ENCODE measurements at regions of chr4 and their contacts with region 1.

Region 1: DNA sequence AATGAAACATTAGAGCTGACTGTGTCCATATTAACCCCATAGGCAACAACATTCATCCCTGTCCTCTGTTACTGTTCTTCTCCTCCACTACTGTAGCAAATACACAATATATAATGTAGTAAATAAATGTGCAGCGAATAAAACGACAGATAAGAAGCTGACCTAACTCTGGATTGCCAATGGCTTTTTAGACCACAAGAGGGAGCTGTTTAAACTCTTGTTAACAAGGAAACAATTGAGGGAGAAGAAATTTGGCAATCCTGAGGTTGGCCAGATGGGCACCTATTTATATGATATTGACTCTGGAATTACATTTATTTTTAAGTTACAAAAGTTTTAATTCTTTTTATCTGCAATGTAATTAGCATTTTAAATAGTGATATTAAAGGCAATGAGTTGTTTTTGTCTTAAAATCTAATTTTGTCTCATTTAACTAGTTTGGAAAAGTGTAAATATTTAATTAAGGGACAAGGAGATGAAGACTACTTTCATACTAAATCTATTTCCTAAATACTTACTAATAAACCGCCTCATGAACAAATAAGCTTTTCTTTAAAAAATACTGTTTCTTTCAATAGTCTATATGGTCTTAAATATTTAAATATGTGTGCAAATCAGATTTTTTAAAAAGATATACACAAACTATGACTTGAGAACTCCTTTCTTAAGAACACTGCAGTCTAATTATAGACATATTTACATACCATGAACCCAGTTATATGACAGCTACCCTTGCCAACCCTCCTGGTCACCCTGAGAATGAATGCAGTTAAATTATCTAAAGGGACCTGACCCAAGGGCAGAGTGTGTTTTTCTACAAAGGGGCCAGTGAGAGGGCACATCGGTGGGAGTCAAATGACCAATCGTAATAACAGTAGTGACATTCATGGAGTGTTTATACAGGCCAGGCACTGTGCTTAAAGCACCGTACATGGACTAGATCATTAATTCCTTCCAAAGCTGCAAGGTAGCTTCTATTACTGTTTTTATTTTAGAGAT is 52.9 kb upstream of the HPF1 start:
- DNase-seq: no peak
- H3K4me3 ChIP-seq: no peak overlapping the region
- H3K27me3 ChIP-seq: peaks cover 3% of the 10 kb centered on the region; the same call in 1 of the 2 replicates
- CTCF ChIP-seq: peak; percentile 82

Region 2: GRCh38 chr4:169612871-169613859 is 197.5 kb before region 1 on chr4:
- CTCF ChIA-PET with region 1: interaction called, 11 read pairs
- POLR2A ChIA-PET with region 1: no interaction called
- DNase-seq: no peak
- H3K4me3 ChIP-seq: peak overlapping the region; percentile 85
- H3K27me3 ChIP-seq: no peaks in the 10 kb centered on the region
- CTCF ChIP-seq: peak; percentile 79

Region 3: DNA sequence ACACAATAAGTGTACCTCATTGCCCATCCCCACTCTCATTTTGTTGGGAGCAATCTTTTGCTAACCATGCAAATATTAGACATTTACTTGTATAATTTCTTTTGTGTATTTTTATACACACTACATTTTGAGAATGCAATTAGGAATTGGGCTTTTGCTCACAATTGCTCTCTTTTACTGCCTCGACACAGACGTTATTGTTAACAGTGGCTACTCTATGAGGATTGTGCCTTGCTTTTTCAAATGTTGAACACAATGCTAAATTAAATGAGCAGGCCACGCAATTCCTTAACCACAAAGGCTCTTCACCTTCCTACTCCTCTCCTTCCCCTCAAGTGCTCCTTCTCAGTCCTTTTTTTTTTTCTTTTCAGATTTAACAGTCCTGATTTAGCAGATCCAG is 10.1 kb before region 1 on chr4:
- CTCF ChIA-PET with region 1: interaction called, 10 read pairs
- POLR2A ChIA-PET with region 1: no interaction called
- DNase-seq: no peak
- H3K4me3 ChIP-seq: no peak overlapping the region
- H3K27me3 ChIP-seq: peaks cover 2% of the 10 kb centered on the region
- CTCF ChIP-seq: no peak

Region 4: GRCh38 chr4:169890906-169891305 is 80.3 kb after region 1 on chr4:
- CTCF ChIA-PET with region 1: no interaction called
- POLR2A ChIA-PET with region 1: no interaction called
- DNase-seq: no peak
- H3K4me3 ChIP-seq: no peak overlapping the region
- H3K27me3 ChIP-seq: no peaks in the 10 kb centered on the region
- CTCF ChIP-seq: no peak

Region 5: GRCh38 chr4:170030121-170030520 is 219.5 kb after region 1 on chr4:
- CTCF ChIA-PET with region 1: interaction called, 11 read pairs
- POLR2A ChIA-PET with region 1: no interaction called
- DNase-seq: no peak
- H3K4me3 ChIP-seq: no peak overlapping the region
- H3K27me3 ChIP-seq: peaks cover 4% of the 10 kb centered on the region
- CTCF ChIP-seq: no peak

Region 6: DNA sequence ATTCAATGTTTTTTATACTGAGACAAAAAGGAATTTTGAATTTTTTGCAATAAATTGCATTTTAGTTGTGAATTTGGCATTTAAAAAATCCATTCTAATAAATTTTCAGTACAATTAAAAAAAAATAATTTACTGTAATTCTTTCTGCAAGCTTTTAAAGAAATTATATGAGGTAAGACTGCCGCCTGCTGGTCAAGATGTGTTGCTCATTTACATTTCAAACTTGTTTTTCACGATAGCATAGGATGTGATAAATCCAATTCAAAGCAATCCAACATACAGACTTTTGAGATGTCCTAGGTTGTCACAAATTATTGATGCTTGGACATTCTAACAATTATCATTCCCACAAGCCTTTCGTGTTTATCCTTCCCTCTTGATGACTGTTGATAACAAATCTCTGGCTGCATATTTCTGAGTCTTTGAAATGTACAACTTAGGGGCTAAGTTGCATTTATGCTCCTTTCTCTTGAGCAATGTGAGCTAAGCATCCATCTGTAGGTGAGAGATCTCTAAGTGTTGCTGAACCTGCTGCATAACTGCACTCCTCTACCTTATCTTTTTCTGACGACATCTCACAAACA is 237.2 kb after region 1 on chr4:
- CTCF ChIA-PET with region 1: interaction called, 58 read pairs
- POLR2A ChIA-PET with region 1: no interaction called
- DNase-seq: no peak
- H3K4me3 ChIP-seq: no peak overlapping the region
- H3K27me3 ChIP-seq: peaks cover 4% of the 10 kb centered on the region
- CTCF ChIP-seq: peak; percentile 66